ENCODE measurements at regions of chrX and their contacts with region 1.

Region 1: GRCh38 chrX:107227780-107228485 is 21.5 kb downstream of the DNAAF6 start:
- DNase-seq: no peak
- ATAC-seq: no peak
- H3K4me3 ChIP-seq: no peak overlapping the region
- H3K27ac ChIP-seq: no peak overlapping the region
- H3K4me1 ChIP-seq: no peaks in the 10 kb centered on the region
- H3K27me3 ChIP-seq: peaks cover 0 to 21% (median 0%) of the 10 kb centered on the region in 9 donors
- CTCF ChIP-seq: no peak
- POLR2A ChIP-seq: no peak

Region 2: DNA sequence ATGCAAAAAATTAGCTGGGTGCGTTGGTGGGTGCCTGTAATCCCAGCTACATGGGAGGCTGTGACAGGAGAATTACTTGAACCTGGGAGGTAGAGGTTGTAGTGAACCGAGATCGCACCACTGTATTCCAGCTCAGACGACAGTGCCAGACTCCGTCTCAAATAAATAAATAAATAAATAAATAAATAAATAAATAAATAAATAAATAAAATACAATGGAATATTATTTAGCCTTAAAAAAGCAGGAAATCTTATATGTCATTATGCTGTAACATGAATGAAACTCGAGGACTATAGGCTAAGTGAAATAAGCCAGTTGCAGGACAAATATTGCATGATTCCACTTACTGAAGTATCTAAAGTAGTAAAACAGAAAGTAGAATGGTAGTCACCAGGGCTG is 151.8 kb before region 1 on chrX:
- intact Hi-C with region 1: no loop called
- DNase-seq: no peak
- ATAC-seq: no peak
- H3K4me3 ChIP-seq: no peak overlapping the region
- H3K27ac ChIP-seq: no peak overlapping the region
- H3K4me1 ChIP-seq: no peaks in the 10 kb centered on the region
- H3K27me3 ChIP-seq: no peaks in the 10 kb centered on the region
- CTCF ChIP-seq: no peak
- POLR2A ChIP-seq: no peak

Region 3: DNA sequence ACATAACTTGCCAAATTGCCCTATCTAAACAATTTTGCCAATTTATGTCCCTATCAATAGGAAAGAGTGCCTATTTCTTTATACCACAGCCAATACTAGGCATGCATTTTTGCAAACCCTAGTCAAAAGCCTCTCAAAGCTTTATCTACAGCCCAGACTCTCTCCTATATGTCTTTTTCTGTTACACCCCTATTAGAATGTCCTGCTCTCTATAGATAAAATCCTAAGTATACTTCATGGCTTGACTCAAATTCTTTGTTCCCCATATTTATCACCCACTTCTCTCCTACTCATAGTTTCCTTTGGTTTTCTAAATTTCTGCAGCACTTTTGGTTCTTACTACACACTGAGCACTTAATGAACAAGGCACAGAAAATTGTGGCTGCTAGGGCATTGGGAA is 59.7 kb before region 1 on chrX:
- intact Hi-C with region 1: loop called in 1 of 10 experiments (anchors 2 kb)
- DNase-seq: no peak
- ATAC-seq: no peak
- H3K4me3 ChIP-seq: no peak overlapping the region
- H3K27ac ChIP-seq: no peak overlapping the region
- H3K4me1 ChIP-seq: no peaks in the 10 kb centered on the region
- H3K27me3 ChIP-seq: peaks cover 0 to 4% (median 0%) of the 10 kb centered on the region in 9 donors
- CTCF ChIP-seq: no peak
- POLR2A ChIP-seq: no peak